Thyroid gland (tissue), 4 donors: ENCODE measurements at regions of chr12 and their contacts with region 1.

Region 1: DNA sequence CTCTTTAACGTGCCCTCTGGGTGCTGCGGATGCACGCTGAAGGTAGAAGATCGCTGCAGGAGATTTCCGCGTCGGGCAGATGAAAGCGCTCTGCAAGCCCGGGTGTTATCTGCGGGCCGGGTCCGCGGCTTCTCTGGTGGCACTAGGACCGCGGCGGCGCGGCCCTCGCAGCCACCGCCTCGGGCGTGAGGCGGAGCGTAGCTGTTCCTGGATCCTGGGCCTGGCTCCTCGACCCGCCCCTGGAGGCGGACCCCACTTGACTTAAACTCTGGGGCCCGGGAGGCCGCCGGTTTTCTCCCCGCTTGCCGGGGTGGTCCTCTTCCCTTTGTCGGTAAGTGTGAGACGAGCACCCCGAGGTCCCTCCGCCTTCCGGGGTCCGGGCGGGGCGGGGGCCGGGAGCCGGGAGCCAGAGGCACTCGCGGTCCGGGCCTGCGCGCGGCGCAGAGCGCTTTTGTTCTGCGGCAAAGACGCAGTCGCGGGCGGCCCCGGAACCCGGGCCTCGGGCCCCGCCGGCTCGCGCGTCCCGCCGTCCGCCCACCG is at the start of gene RESF1:
- DNase-seq: peak; percentile 92
- H3K4me3 ChIP-seq: peak within 1 kb of the TSS; percentile 10 to 61 (median 48)
- H3K27ac ChIP-seq: peak within 1 kb of the TSS; percentile 84 to 91 (median 86)
- H3K4me1 ChIP-seq: peaks cover 31 to 34% of the 10 kb centered on the region in 2 donors
- H3K27me3 ChIP-seq: no peaks in the 10 kb centered on the region
- CTCF ChIP-seq: no peak
- POLR2A ChIP-seq: peak; percentile 34 to 85
- total RNA-seq, gene RESF1: 62.5 to 75.1 (median 63.3) TPM

Region 2: DNA sequence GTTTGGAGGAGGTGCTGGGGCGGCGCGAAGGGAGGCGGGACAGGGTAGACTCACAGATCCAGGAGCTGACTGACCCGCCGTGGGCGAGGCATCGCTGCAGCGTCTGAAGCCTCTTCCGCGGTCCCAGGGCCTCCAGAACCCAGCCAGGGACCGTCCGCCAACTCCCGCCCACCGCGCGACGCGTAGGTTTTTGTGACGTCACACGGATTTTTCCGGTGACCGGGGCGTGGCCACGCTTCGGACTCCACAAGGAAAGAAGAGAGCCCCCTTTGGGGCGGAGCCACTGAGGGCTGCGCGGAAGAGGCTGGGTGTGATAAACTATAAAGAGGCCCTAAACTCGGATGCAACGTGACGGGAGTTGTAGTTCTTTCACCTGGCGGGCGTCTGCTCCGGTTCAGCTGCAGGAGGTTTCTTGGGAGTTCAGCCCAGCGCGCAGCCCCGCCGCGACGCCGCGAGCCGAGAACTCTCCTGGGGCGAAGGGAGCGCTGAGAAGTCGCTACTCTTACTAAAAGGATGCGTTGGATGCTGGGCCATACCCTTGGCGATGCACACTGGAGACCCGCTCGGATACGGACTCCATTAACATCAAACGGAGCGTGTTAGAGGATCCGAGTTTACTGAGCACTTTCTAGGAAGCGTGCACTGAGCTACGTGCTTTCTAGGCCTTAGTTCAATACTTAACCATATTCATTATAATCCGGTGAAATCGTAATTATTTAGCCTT is 230.2 kb before region 1 on chr12 and contains the start of gene AMN1:
- intact Hi-C with region 1: loop called (anchors 10 kb)
- DNase-seq: peak; percentile 99 to 100
- H3K4me3 ChIP-seq: peak within 1 kb of the TSS in 2 of 3 donors; percentile 60 to 82
- H3K27ac ChIP-seq: peak within 1 kb of the TSS; percentile 95 to 96 (median 95)
- H3K4me1 ChIP-seq: peaks cover 0 to 34% of the 10 kb centered on the region in 2 donors
- H3K27me3 ChIP-seq: no peaks in the 10 kb centered on the region
- CTCF ChIP-seq: peak in 3 of 6 experiments; percentile 10 to 32 (median 28)
- POLR2A ChIP-seq: peak in 1 of 2 donors; percentile 79
- total RNA-seq, gene AMN1: 4.8 to 21.0 (median 8.8) TPM

Region 3: GRCh38 chr12:31896514-31897039 is 62.7 kb before region 1 on chr12:
- intact Hi-C with region 1: no loop called
- DNase-seq: peak; percentile 9 to 25
- H3K4me3 ChIP-seq: no peak overlapping the region
- H3K27ac ChIP-seq: no peak overlapping the region
- H3K4me1 ChIP-seq: peaks cover 0 to 9% of the 10 kb centered on the region in 2 donors
- H3K27me3 ChIP-seq: no peaks in the 10 kb centered on the region
- CTCF ChIP-seq: no peak
- POLR2A ChIP-seq: no peak